ENCODE measurements at regions of chr7 and their contacts with region 1.

Region 1: DNA sequence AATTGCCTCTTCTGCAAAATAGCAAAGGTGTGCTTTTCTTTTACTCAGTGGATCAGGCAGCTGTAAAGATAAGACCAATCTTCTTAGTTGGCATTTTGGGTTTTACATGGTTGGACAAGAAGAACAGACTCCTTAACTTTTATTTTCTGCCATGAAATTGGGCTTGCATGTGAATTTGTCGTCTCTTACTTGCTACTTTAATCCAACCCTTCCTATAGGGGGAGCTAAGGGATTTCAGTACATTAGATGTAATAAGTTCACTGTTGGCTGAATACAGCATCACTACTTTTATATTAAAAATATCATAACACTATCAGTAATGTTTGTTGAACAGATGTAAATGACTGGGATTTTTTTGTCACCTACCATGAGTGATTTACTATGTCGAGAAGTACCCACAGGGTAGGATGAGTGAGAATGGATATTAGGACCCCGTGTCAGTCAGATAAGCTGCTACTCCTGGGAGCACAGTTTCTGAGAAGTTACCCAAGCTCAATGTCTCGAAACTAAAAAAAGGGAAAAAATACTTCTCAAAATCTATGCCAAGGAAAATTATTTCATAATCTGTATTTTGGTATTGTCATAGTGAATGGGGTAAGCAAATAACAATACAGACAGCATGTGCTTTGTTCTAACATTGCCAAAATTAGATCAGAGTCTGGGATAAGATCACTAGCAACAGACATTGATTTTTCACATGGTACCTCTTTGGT is 127.4 kb upstream of the AGR3 start:
- DNase-seq: peak in 2 of 9 donors; percentile 5 to 6
- ATAC-seq: peak; percentile 73
- H3K4me3 ChIP-seq: no peak overlapping the region
- H3K4me3 Mint-ChIP-seq: no peak overlapping the region
- H3K27ac ChIP-seq: no peak overlapping the region
- H3K27ac Mint-ChIP-seq: no peak overlapping the region
- H3K4me1 ChIP-seq: peaks cover 0 to 8% of the 10 kb centered on the region in 2 donors
- H3K4me1 Mint-ChIP-seq: peaks cover 5 to 33% (median 11%) of the 10 kb centered on the region in 7 donors
- H3K27me3 ChIP-seq: no peaks in the 10 kb centered on the region
- H3K27me3 Mint-ChIP-seq: peaks cover 0 to 16% (median 0%) of the 10 kb centered on the region in 5 donors

Region 2: GRCh38 chr7:17130281-17131059 is 121.3 kb after region 1 on chr7:
- CTCF ChIA-PET with region 1: no interaction called
- POLR2A ChIA-PET with region 1: no interaction called
- intact Hi-C with region 1: loop called in 1 of 2 experiments (anchors 10 kb)
- DNase-seq: no peak
- ATAC-seq: peak; percentile 32
- H3K4me3 ChIP-seq: no peak overlapping the region
- H3K4me3 Mint-ChIP-seq: peak overlapping the region in 7 of 10 donors; percentile 8 to 49 (median 16)
- H3K27ac ChIP-seq: no peak overlapping the region
- H3K27ac Mint-ChIP-seq: no peak overlapping the region
- H3K4me1 ChIP-seq: no peaks in the 10 kb centered on the region
- H3K4me1 Mint-ChIP-seq: peaks cover 4 to 38% (median 11%) of the 10 kb centered on the region in 7 donors
- H3K27me3 ChIP-seq: no peaks in the 10 kb centered on the region
- H3K27me3 Mint-ChIP-seq: no peaks in the 10 kb centered on the region

Region 3: GRCh38 chr7:17530741-17531417 is 521.7 kb after region 1 on chr7:
- CTCF ChIA-PET with region 1: no interaction called
- POLR2A ChIA-PET with region 1: no interaction called
- intact Hi-C with region 1: loop called in 1 of 2 experiments (anchors 1 kb)
- DNase-seq: peak in 3 of 9 donors; percentile 1 to 16 (median 7)
- ATAC-seq: no peak
- H3K4me3 ChIP-seq: no peak overlapping the region
- H3K4me3 Mint-ChIP-seq: no peak overlapping the region
- H3K27ac ChIP-seq: no peak overlapping the region
- H3K27ac Mint-ChIP-seq: no peak overlapping the region
- H3K4me1 ChIP-seq: no peaks in the 10 kb centered on the region
- H3K4me1 Mint-ChIP-seq: peaks cover 0 to 10% (median 0%) of the 10 kb centered on the region in 7 donors
- H3K27me3 ChIP-seq: no peaks in the 10 kb centered on the region
- H3K27me3 Mint-ChIP-seq: peaks cover 0 to 18% (median 8%) of the 10 kb centered on the region in 5 donors

Region 4: DNA sequence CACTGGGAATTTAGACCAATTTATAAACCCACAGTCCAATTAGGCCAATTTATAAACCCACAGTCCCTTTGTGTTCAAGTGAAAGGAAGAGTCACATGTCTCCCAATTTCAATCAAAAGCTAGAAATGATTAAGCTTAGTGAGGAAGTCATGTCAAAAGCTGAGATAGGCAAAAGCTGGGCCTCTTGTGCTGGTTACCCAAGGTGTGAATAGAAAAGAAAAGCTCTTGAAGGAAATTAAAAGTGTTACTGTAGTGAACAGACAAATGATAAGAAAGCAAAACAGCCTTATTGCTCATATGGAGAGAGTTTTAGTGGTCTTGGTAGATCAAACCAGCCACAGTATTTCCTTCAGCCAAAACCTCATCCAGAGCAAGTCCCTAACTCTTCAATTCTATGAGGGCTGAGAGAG is 1731.4 kb after region 1 on chr7:
- CTCF ChIA-PET with region 1: no interaction called
- POLR2A ChIA-PET with region 1: no interaction called
- intact Hi-C with region 1: no loop called
- DNase-seq: no peak
- ATAC-seq: no peak
- H3K4me3 ChIP-seq: no peak overlapping the region
- H3K4me3 Mint-ChIP-seq: no peak overlapping the region
- H3K27ac ChIP-seq: no peak overlapping the region
- H3K27ac Mint-ChIP-seq: peak overlapping the region in 1 of 9 donors; percentile 41
- H3K4me1 ChIP-seq: no peaks in the 10 kb centered on the region
- H3K4me1 Mint-ChIP-seq: peaks cover 0 to 8% (median 0%) of the 10 kb centered on the region in 7 donors
- H3K27me3 ChIP-seq: peaks cover 0 to 2% of the 10 kb centered on the region in 2 donors
- H3K27me3 Mint-ChIP-seq: no peaks in the 10 kb centered on the region